K562 (cell line): ENCODE measurements at regions of chr6 and their contacts with region 1.

Region 1: GRCh38 chr6:144149891-144150709 is at the start of gene STX11:
- DNase-seq: peak; percentile 82 to 89 (median 84)
- ATAC-seq: peak; percentile 98
- H3K4me3 ChIP-seq: peak within 1 kb of the TSS; percentile 51
- H3K27ac ChIP-seq: no peak within 1 kb of the TSS
- H3K4me1 ChIP-seq: peaks cover 7 to 16% of the 10 kb centered on the region in 2 experiments; a peak in 4 of 5 replicates
- H3K27me3 ChIP-seq: peaks cover 17 to 29% of the 10 kb centered on the region in 2 experiments
- CTCF ChIP-seq: peak in 1 of 3 experiments; percentile 16; a peak in 1 of 6 replicates
- EP300 ChIP-seq: no peak
- POLR2A ChIP-seq: no peak
- RAD21 ChIP-seq: no peak
- polyA plus RNA-seq, gene STX11: 0.06 to 0.07 TPM

Region 2: GRCh38 chr6:143427109-143427817 is 722.8 kb before region 1 on chr6:
- CTCF ChIA-PET with region 1: no interaction called
- POLR2A ChIA-PET with region 1: no interaction called
- in situ Hi-C with region 1: no loop called
- intact Hi-C with region 1: no loop called
- DNase-seq: peak; percentile 67 to 80 (median 78)
- ATAC-seq: peak; percentile 100
- H3K4me3 ChIP-seq: no peak overlapping the region
- H3K27ac ChIP-seq: no peak overlapping the region
- H3K4me1 ChIP-seq: no peaks in the 10 kb centered on the region
- H3K27me3 ChIP-seq: no peaks in the 10 kb centered on the region
- CTCF ChIP-seq: peak; percentile 86 to 98 (median 94)
- EP300 ChIP-seq: no peak
- POLR2A ChIP-seq: peak; percentile 46
- RAD21 ChIP-seq: peak; percentile 93 to 97

Region 3: GRCh38 chr6:144170044-144170443 is 19.9 kb after region 1 on chr6:
- CTCF ChIA-PET with region 1: no interaction called
- POLR2A ChIA-PET with region 1: interaction called, 3 read pairs
- in situ Hi-C with region 1: no loop called
- intact Hi-C with region 1: loop called (anchors 1 kb)
- DNase-seq: no peak
- ATAC-seq: no peak
- H3K4me3 ChIP-seq: no peak overlapping the region
- H3K27ac ChIP-seq: no peak overlapping the region
- H3K4me1 ChIP-seq: no peaks in the 10 kb centered on the region; a peak in 1 of 5 replicates
- H3K27me3 ChIP-seq: no peaks in the 10 kb centered on the region
- CTCF ChIP-seq: no peak
- EP300 ChIP-seq: no peak
- POLR2A ChIP-seq: no peak
- RAD21 ChIP-seq: no peak